ENCODE measurements at regions of chr1 and their contacts with region 1.

Region 1: GRCh38 chr1:150053926-150054325 is 13.7 kb upstream of the VPS45 start:
- DNase-seq: no peak
- ATAC-seq: no peak
- H3K4me3 ChIP-seq: no peak overlapping the region
- H3K27ac ChIP-seq: no peak overlapping the region
- H3K4me1 ChIP-seq: peaks cover 0 to 6% (median 0%) of the 10 kb centered on the region in 4 donors
- H3K27me3 ChIP-seq: no peaks in the 10 kb centered on the region
- CTCF ChIP-seq: no peak
- POLR2A ChIP-seq: no peak

Region 2: DNA sequence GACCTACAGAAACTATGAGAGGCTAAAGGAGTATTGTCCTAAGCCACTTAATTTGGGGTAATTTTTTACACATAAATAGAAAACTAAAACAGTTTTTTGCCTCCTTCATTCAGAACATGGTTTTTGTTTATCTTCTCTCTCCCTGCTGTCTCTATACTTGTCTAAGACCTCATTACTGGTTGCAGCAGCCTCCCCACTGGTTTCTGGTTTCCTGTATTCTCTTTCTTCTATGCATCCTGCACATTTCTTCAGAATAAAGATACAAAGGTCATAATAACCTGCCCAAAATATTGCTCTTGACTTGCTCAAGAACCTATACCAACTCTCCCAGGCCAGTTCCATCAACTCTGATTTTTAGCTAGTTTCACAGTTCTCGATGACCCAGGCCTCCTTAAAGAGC is 174.4 kb before region 1 on chr1:
- intact Hi-C with region 1: no loop called
- DNase-seq: no peak
- ATAC-seq: no peak
- H3K4me3 ChIP-seq: no peak overlapping the region
- H3K27ac ChIP-seq: no peak overlapping the region
- H3K4me1 ChIP-seq: peaks cover 0 to 10% (median 4%) of the 10 kb centered on the region in 4 donors
- H3K27me3 ChIP-seq: no peaks in the 10 kb centered on the region
- CTCF ChIP-seq: no peak
- POLR2A ChIP-seq: no peak

Region 3: GRCh38 chr1:149962123-149962548 is 91.8 kb before region 1 on chr1:
- intact Hi-C with region 1: loop called in 1 of 2 experiments (anchors 10 kb)
- DNase-seq: no peak
- ATAC-seq: peak; percentile 71 to 85 (median 82)
- H3K4me3 ChIP-seq: no peak overlapping the region
- H3K27ac ChIP-seq: peak overlapping the region; percentile 53 to 77 (median 59)
- H3K4me1 ChIP-seq: peaks cover 0 to 44% (median 7%) of the 10 kb centered on the region in 4 donors
- H3K27me3 ChIP-seq: no peaks in the 10 kb centered on the region
- CTCF ChIP-seq: peak; percentile 72 to 88 (median 84)
- POLR2A ChIP-seq: no peak

Region 4: GRCh38 chr1:149978547-149979023 is 75.3 kb before region 1 on chr1:
- intact Hi-C with region 1: loop called in 1 of 2 experiments (anchors 10 kb)
- DNase-seq: peak in 2 of 3 donors; percentile 48 to 84
- ATAC-seq: peak; percentile 82 to 88 (median 85)
- H3K4me3 ChIP-seq: no peak overlapping the region
- H3K27ac ChIP-seq: peak overlapping the region in 2 of 3 donors; percentile 33 to 35
- H3K4me1 ChIP-seq: peaks cover 0 to 25% (median 9%) of the 10 kb centered on the region in 4 donors
- H3K27me3 ChIP-seq: no peaks in the 10 kb centered on the region
- CTCF ChIP-seq: no peak
- POLR2A ChIP-seq: no peak

Region 5: GRCh38 chr1:150093805-150094204 is 39.9 kb after region 1 on chr1:
- intact Hi-C with region 1: no loop called
- DNase-seq: no peak
- ATAC-seq: no peak
- H3K4me3 ChIP-seq: no peak overlapping the region
- H3K27ac ChIP-seq: no peak overlapping the region
- H3K4me1 ChIP-seq: no peaks in the 10 kb centered on the region
- H3K27me3 ChIP-seq: no peaks in the 10 kb centered on the region
- CTCF ChIP-seq: no peak
- POLR2A ChIP-seq: no peak